MCF 10A (cell line): ENCODE measurements at regions of chr9 and their contacts with region 1.

Region 1: GRCh38 chr9:99906403-99907207 is at the start of gene STX17:
- DNase-seq: peak; percentile 81
- H3K4me3 Mint-ChIP-seq: peak within 1 kb of the TSS; percentile 93
- H3K27ac Mint-ChIP-seq: peak within 1 kb of the TSS; percentile 96
- H3K4me1 Mint-ChIP-seq: peaks cover 32% of the 10 kb centered on the region
- H3K27me3 Mint-ChIP-seq: no peaks in the 10 kb centered on the region
- CTCF ChIP-seq: no peak
- total RNA-seq, gene STX17: 32.4 and 37.2 TPM in 2 replicates

Region 2: GRCh38 chr9:99221621-99222415 is 684.8 kb before region 1 on chr9 and contains the starts of genes ALG2 and SEC61B:
- CTCF ChIA-PET with region 1: no interaction called
- POLR2A ChIA-PET with region 1: interaction called, 12 read pairs
- intact Hi-C with region 1: no loop called
- DNase-seq: peak; percentile 92
- H3K4me3 Mint-ChIP-seq: peak within 1 kb of the TSS; percentile 98
- H3K27ac Mint-ChIP-seq: peak within 1 kb of the TSS; percentile 100
- H3K4me1 Mint-ChIP-seq: peaks cover 50% of the 10 kb centered on the region
- H3K27me3 Mint-ChIP-seq: no peaks in the 10 kb centered on the region
- CTCF ChIP-seq: no peak
- total RNA-seq, gene ALG2: 54.6 and 54.7 TPM in 2 replicates
- total RNA-seq, gene SEC61B: 238 and 324 TPM in 2 replicates

Region 3: DNA sequence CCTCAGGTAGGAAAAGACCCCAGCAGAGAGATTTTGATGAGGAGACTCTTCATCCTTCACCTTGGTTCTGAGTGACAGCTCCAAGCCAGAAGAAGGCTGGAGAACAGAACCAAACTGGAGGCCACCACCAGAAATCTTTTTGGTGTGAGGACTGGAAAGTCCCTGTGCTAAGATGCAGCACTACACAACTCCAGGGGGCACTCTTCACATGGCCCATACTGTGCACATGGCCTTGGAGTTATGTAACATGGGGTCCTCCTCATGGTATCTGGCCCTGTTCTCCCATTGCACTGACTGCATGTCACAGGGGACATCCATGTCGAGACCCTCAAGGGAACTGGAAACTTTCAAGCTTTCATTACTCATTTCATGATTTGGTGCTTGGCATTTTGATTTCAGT is 17.5 kb before region 1 on chr9:
- CTCF ChIA-PET with region 1: no interaction called
- POLR2A ChIA-PET with region 1: interaction called, 8 read pairs
- intact Hi-C with region 1: loop called (anchors 1 kb)
- DNase-seq: no peak
- H3K4me3 Mint-ChIP-seq: no peak overlapping the region
- H3K27ac Mint-ChIP-seq: no peak overlapping the region
- H3K4me1 Mint-ChIP-seq: no peaks in the 10 kb centered on the region
- H3K27me3 Mint-ChIP-seq: peaks cover 51% of the 10 kb centered on the region
- CTCF ChIP-seq: no peak

Region 4: DNA sequence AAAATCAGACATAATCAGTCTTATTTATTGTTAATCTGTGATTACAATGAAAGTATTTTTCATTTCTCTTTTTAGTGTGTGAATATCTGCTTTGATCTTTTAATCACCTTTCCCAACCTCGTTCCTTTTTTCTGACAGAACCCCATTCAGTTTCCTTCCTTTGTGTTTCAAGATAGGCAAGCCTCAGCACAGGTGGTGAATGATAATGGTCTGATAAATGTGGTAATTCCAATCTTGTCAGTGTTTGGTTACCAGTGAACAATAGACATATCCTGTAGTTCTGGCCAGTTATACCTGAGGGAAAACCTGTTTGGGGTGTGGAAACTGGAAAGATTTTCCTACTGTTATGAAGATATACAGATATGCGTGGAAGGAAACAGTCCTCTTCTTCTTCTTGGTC is 13.3 kb after region 1 on chr9:
- CTCF ChIA-PET with region 1: interaction called, 3 read pairs
- POLR2A ChIA-PET with region 1: interaction called, 29 read pairs
- intact Hi-C with region 1: no loop called
- DNase-seq: no peak
- H3K4me3 Mint-ChIP-seq: no peak overlapping the region
- H3K27ac Mint-ChIP-seq: no peak overlapping the region
- H3K4me1 Mint-ChIP-seq: no peaks in the 10 kb centered on the region
- H3K27me3 Mint-ChIP-seq: no peaks in the 10 kb centered on the region
- CTCF ChIP-seq: no peak